Gastrocnemius medialis (tissue), 4 donors: ENCODE measurements at regions of chr1 and their contacts with region 1.

Region 1: GRCh38 chr1:151106894-151107293 is 36.3 kb downstream of the GABPB2 start:
- DNase-seq: no peak
- ATAC-seq: no peak
- H3K4me3 ChIP-seq: no peak overlapping the region
- H3K27ac ChIP-seq: no peak overlapping the region
- H3K4me1 ChIP-seq: no peaks in the 10 kb centered on the region
- H3K27me3 ChIP-seq: no peaks in the 10 kb centered on the region
- CTCF ChIP-seq: no peak
- POLR2A ChIP-seq: no peak

Region 2: DNA sequence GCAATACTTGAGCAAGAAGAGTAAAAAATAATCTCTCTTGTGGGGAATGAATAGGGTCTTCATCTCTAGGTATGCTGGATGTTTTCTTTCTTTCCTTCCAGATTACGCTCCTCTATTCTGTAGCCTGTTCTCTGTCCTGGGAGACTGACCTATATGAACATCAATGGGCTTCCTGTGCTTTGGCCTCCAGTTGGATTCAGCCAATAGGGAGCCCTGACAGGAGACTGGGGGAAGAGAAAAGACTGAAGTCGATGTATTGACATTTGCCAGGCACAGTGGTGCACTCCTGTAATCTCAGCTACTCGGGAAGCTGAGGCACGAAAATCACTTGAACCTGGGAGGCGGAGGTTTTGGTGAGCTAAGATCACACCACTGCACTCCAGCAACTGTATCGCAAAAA is 21.9 kb after region 1 on chr1:
- in situ Hi-C with region 1: no loop called
- intact Hi-C with region 1: loop called (anchors 2 kb)
- DNase-seq: peak in 1 of 2 donors; percentile 10
- ATAC-seq: no peak
- H3K4me3 ChIP-seq: no peak overlapping the region
- H3K27ac ChIP-seq: no peak overlapping the region
- H3K4me1 ChIP-seq: peaks cover 0 to 6% of the 10 kb centered on the region in 2 donors
- H3K27me3 ChIP-seq: no peaks in the 10 kb centered on the region
- CTCF ChIP-seq: no peak
- POLR2A ChIP-seq: no peak

Region 3: DNA sequence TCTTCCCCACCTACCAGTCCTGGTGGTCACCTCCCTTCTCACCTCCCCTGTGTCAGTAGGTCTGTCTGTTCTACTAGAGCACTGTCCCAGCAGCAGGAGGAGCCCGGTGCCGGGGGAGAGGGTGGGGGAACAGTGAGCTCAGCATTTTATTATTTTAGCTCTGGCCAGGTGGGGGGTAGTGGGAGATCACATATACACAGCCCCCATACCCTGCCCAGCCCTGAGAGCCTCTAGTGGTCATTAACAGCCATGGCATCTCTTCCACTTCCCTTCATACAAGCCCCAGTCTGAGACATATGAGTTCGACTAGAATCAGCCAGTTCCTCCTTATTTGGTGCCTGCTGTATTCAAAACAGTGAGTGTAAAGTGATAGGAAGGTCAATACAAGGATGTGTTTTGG is 69.0 kb after region 1 on chr1 and contains the start of gene TMOD4:
- in situ Hi-C with region 1: no loop called
- intact Hi-C with region 1: no loop called
- DNase-seq: peak; percentile 44 to 91
- ATAC-seq: peak; percentile 66 to 75
- H3K4me3 ChIP-seq: peak within 1 kb of the TSS; percentile 43 to 60 (median 50)
- H3K27ac ChIP-seq: peak within 1 kb of the TSS; percentile 91 to 99 (median 92)
- H3K4me1 ChIP-seq: peaks cover 28 to 40% of the 10 kb centered on the region in 2 donors
- H3K27me3 ChIP-seq: no peaks in the 10 kb centered on the region
- CTCF ChIP-seq: peak; percentile 65 to 86 (median 79)
- POLR2A ChIP-seq: peak; percentile 46 to 87
- total RNA-seq, gene TMOD4: 58.3 to 315 (median 188) TPM

Region 4: DNA sequence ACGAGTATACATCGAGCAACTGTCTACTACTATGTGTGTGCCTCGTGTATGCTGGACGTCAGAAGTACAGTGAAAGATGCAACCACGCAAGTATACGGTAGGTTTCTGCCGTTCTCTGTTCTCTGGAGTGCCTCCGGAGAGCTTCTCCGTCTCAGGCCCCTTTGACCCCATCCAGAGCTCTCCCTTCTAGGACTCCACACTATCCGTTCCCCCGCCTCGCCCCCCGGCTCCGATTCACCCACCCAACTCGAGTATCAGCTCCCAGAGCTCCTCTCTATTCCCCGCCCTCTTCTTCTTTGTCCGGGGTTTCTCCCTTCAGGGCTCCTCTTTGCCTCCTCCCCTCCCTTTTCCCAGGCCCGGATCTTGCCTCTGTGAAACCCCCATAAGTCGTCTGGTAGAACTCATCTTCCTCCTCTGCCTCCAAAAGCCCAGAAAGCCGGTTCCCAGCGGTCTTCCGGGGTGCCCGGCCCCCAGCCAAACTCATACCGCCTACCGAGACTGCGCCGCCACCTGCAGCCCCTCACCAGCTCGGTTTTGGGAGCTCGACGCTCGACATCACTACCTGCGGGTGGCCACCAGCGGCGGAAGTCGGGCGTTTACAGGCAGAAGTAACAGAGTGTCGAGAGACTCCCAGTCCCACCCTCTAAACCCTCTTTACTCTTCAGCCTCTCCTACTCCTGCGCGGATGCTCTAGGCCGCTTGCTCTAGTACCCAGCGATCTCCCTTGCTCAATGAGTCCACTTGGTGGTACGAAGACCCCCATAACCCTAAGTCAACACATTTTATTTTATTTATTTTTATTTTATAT is 82.9 kb after region 1 on chr1 and contains the start of gene VPS72:
- in situ Hi-C with region 1: no loop called
- intact Hi-C with region 1: no loop called
- DNase-seq: peak; percentile 82 to 89
- ATAC-seq: peak; percentile 74 to 83
- H3K4me3 ChIP-seq: peak within 1 kb of the TSS; percentile 81 to 98 (median 86)
- H3K27ac ChIP-seq: peak within 1 kb of the TSS; percentile 92 to 99 (median 94)
- H3K4me1 ChIP-seq: peaks cover 30 to 34% of the 10 kb centered on the region in 2 donors
- H3K27me3 ChIP-seq: no peaks in the 10 kb centered on the region
- CTCF ChIP-seq: peak in 4 of 5 experiments; percentile 27 to 45 (median 40)
- POLR2A ChIP-seq: peak; percentile 67 to 74
- total RNA-seq, gene VPS72: 62.2 to 95.8 (median 68.9) TPM